Gastrocnemius medialis (tissue), 4 donors: ENCODE measurements at regions of chr3 and their contacts with region 1.

Region 1: DNA sequence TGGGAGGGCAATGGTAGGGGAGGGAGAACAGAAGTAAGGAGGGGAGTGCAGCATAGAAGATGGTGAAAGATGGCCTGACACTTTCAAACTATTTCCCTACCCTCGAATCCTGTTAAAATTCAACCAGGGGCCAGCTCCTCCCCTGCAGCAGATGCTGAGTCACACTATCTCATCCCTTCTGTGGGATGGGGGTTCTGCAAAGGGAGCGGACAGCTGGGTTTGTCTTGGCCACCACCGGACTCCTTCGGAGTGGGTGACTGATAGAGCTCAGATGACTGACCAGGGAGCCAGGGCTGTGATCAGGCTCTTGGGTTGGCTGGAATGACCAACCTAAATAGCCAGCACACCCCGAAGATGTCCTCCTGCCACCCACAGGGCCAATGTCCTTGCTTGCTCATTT is 33.6 kb upstream of the TMCC1 start:
- DNase-seq: no peak
- ATAC-seq: no peak
- H3K4me3 ChIP-seq: no peak overlapping the region
- H3K27ac ChIP-seq: no peak overlapping the region
- H3K4me1 ChIP-seq: no peaks in the 10 kb centered on the region
- H3K27me3 ChIP-seq: no peaks in the 10 kb centered on the region
- CTCF ChIP-seq: no peak
- POLR2A ChIP-seq: no peak

Region 2: GRCh38 chr3:129633751-129634392 is 293.2 kb before region 1 on chr3:
- in situ Hi-C with region 1: loop called in 2 of 4 experiments (anchors 10 kb)
- intact Hi-C with region 1: no loop called
- DNase-seq: no peak
- ATAC-seq: no peak
- H3K4me3 ChIP-seq: no peak overlapping the region
- H3K27ac ChIP-seq: no peak overlapping the region
- H3K4me1 ChIP-seq: no peaks in the 10 kb centered on the region
- H3K27me3 ChIP-seq: no peaks in the 10 kb centered on the region
- CTCF ChIP-seq: no peak
- POLR2A ChIP-seq: no peak

Region 3: GRCh38 chr3:129801354-129801753 is 125.7 kb before region 1 on chr3:
- in situ Hi-C with region 1: no loop called
- intact Hi-C with region 1: no loop called
- DNase-seq: no peak
- ATAC-seq: no peak
- H3K4me3 ChIP-seq: no peak overlapping the region
- H3K27ac ChIP-seq: no peak overlapping the region
- H3K4me1 ChIP-seq: peaks cover 0 to 2% of the 10 kb centered on the region in 2 donors
- H3K27me3 ChIP-seq: no peaks in the 10 kb centered on the region
- CTCF ChIP-seq: no peak
- POLR2A ChIP-seq: no peak

Region 4: GRCh38 chr3:129975038-129975704 is 48.1 kb after region 1 on chr3:
- in situ Hi-C with region 1: no loop called
- intact Hi-C with region 1: no loop called
- DNase-seq: no peak
- ATAC-seq: no peak
- H3K4me3 ChIP-seq: peak overlapping the region in 3 of 4 donors; percentile 9 to 44 (median 28)
- H3K27ac ChIP-seq: no peak overlapping the region
- H3K4me1 ChIP-seq: peaks cover 6 to 14% of the 10 kb centered on the region in 2 donors
- H3K27me3 ChIP-seq: peaks cover 37 to 46% (median 44%) of the 10 kb centered on the region in 3 donors
- CTCF ChIP-seq: no peak
- POLR2A ChIP-seq: no peak